ENCODE measurements at regions of chr7 and their contacts with region 1.

Region 1: DNA sequence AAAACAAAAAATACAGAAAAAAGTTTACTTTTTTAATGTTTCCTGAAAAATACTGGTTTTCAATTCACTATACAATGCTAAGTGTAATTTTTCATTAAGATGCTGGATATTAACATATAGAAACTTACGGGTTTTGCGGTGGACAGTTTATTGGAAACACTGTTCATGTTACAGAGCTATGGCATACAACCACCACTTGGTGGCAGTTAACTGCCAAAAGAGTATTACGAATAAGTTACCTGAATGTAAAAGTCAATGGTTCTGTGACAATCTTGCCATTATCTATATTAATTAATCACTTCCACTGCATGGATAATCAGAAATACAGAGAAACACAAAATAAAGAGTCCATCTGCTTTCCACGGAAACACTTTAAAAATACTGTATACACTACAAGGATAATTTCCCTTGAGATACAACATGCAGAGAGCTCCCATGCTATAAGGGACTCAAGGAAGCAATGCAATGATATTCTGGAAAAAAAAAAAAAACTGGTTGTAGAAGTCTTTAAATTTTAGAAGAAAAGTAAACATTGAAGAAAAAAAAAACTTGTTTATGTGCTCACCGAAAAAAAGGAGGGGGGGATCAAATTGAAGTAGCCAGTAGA is 97.0 kb downstream of the TPK1 start:
- DNase-seq: no peak
- ATAC-seq: peak in 2 of 4 donors; percentile 42 to 67
- H3K4me3 ChIP-seq: no peak overlapping the region
- H3K27ac ChIP-seq: no peak overlapping the region
- H3K4me1 ChIP-seq: peaks cover 0 to 3% (median 0%) of the 10 kb centered on the region in 12 donors
- H3K27me3 ChIP-seq: no peaks in the 10 kb centered on the region
- CTCF ChIP-seq: peak; percentile 58 to 77 (median 68)
- POLR2A ChIP-seq: no peak

Region 2: GRCh38 chr7:144835652-144836544 is 97.1 kb after region 1 on chr7 and contains the start of gene TPK1:
- intact Hi-C with region 1: loop called in 6 of 10 experiments (anchors 5 to 10 kb)
- DNase-seq: peak; percentile 93 to 96 (median 95)
- ATAC-seq: peak; percentile 96 to 98 (median 98)
- H3K4me3 ChIP-seq: peak within 1 kb of the TSS; percentile 65 to 95 (median 78)
- H3K27ac ChIP-seq: peak within 1 kb of the TSS; percentile 93 to 99 (median 96)
- H3K4me1 ChIP-seq: peaks cover 0 to 18% (median 11%) of the 10 kb centered on the region in 12 donors
- H3K27me3 ChIP-seq: no peaks in the 10 kb centered on the region
- CTCF ChIP-seq: peak in 2 of 12 donors; percentile 14 to 25
- POLR2A ChIP-seq: peak in 1 of 2 donors; percentile 89
- total RNA-seq, gene TPK1: 2.0 to 8.2 (median 5.3) TPM

Region 3: DNA sequence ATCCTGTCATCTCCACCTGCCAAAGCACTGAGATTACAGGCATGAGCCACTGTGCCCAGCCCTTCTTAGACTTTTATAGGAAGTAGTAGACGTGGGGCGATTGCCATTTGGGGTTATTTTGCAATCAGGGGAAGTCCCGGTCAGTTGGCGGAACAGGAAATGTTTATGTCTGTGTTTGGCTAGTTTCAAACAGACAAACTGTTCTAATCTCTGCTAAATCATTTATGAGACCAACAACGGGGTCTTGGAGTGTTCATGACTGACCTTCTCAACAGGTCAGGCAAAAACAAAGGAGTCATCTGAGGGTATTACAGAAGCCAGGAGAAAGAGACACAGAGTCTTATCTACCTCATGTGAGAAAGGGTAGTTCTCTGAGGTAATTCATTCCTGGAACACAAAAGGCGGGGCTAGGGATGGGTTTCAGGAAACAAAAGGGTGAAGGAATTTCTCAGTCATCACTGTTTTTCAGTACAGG is 103.6 kb after region 1 on chr7:
- intact Hi-C with region 1: loop called in 6 of 10 experiments (anchors 5 to 10 kb)
- DNase-seq: peak in 4 of 5 donors; percentile 21 to 47 (median 43)
- ATAC-seq: peak; percentile 55 to 90 (median 76)
- H3K4me3 ChIP-seq: peak overlapping the region in 1 of 12 donors; percentile 24
- H3K27ac ChIP-seq: peak overlapping the region in 10 of 12 donors; percentile 16 to 84 (median 36)
- H3K4me1 ChIP-seq: peaks cover 0 to 14% (median 0%) of the 10 kb centered on the region in 12 donors
- H3K27me3 ChIP-seq: no peaks in the 10 kb centered on the region
- CTCF ChIP-seq: no peak
- POLR2A ChIP-seq: no peak

Region 4: GRCh38 chr7:144997512-144997911 is 258.7 kb after region 1 on chr7:
- intact Hi-C with region 1: loop called in 1 of 10 experiments (anchors 5 kb)
- DNase-seq: no peak
- ATAC-seq: no peak
- H3K4me3 ChIP-seq: no peak overlapping the region
- H3K27ac ChIP-seq: no peak overlapping the region
- H3K4me1 ChIP-seq: no peaks in the 10 kb centered on the region
- H3K27me3 ChIP-seq: no peaks in the 10 kb centered on the region
- CTCF ChIP-seq: no peak
- POLR2A ChIP-seq: no peak

Region 5: GRCh38 chr7:145092766-145093165 is 354.0 kb after region 1 on chr7:
- intact Hi-C with region 1: no loop called
- DNase-seq: no peak
- ATAC-seq: no peak
- H3K4me3 ChIP-seq: no peak overlapping the region
- H3K27ac ChIP-seq: no peak overlapping the region
- H3K4me1 ChIP-seq: no peaks in the 10 kb centered on the region
- H3K27me3 ChIP-seq: no peaks in the 10 kb centered on the region
- CTCF ChIP-seq: no peak
- POLR2A ChIP-seq: no peak